ENCODE measurements at regions of chr1 and their contacts with region 1.

Region 1: DNA sequence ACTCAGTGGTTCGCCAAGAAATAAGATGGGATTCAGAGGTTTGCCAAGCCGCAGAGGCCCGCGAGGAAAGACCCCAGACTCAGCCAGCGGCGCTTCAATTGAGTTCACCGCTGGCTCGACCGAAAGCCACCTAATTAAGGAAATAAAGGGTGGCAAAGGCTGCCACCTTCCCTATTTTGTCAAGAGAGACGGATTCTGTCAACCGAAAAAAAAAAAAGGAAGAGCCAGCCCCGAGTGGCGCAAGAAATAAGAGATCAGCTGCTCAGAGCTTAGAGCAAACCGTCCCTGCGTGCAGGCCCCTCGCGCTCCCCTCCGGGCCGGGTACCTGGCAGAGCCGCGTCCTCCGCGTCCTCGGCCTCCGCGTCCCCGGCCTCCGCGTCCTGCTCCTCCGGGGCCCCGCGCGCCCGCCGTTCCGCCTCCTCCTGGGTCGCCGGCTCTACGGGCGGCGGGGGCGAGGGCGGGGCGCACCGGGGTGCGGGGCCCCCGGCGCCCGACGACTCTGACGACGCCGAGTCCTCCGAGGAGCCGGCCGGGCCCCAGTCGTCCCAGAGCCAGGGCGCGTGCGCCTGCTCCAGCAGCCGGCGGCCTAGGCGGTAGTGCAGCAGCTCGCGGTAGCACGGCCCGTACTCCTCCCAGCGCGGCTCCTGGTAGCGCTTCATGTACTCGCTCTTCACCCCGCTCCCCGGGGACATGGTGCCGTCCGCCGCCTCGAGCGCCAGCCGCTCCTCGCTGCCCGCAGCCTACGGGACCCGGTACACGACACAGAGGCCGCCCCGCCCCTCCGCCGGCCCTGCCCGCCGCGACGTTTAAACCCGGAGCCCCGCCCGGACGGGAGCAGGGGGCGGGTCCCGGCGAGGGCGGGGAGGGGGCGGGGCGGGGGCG is 832 bp downstream of the CCSAP start:
- DNase-seq: peak; percentile 81 to 97 (median 92)

Region 2: GRCh38 chr1:229258031-229258756 is 83.8 kb before region 1 on chr1:
- intact Hi-C with region 1: loop called (anchors 5 kb)
- DNase-seq: peak; percentile 28 to 93 (median 81)

Region 3: GRCh38 chr1:229270547-229271447 is 71.2 kb before region 1 on chr1 and contains the start of gene RAB4A:
- intact Hi-C with region 1: loop called (anchors 5 kb)
- DNase-seq: peak; percentile 45 to 93 (median 86)

Region 4: DNA sequence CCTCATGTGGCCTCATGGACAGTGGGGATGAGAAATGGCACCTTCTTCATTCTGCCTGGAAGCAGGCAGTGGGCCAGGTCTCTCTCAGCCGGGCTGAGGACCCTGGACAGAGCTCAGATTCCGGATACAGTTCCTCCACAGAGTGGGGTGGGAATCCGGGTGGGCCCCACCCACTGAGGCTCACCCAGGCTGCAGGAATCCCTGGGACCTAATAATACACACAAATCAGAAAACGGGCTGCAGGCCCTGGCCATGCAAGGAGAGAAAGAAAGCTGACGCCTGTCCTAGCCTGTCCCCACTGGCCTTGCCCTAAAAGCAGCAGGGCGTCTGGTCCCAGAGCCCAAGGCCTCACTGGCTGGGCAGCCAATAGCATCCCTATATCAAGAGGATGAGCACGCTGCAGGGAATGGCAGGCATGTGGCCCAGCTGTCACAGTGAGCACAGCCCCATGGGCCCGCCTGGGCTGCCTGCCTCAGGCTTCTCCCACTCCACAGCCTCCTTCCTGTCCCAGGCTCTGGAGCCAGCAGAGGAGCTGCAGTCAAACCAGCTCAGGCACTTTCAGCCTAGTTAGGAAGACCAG is 66.5 kb after region 1 on chr1:
- intact Hi-C with region 1: loop called (anchors 10 kb)
- DNase-seq: peak in 24 of 42 donors; percentile 12 to 74 (median 40)